B cell (primary cell): ENCODE measurements at regions of chr16 and their contacts with region 1.

Region 1: DNA sequence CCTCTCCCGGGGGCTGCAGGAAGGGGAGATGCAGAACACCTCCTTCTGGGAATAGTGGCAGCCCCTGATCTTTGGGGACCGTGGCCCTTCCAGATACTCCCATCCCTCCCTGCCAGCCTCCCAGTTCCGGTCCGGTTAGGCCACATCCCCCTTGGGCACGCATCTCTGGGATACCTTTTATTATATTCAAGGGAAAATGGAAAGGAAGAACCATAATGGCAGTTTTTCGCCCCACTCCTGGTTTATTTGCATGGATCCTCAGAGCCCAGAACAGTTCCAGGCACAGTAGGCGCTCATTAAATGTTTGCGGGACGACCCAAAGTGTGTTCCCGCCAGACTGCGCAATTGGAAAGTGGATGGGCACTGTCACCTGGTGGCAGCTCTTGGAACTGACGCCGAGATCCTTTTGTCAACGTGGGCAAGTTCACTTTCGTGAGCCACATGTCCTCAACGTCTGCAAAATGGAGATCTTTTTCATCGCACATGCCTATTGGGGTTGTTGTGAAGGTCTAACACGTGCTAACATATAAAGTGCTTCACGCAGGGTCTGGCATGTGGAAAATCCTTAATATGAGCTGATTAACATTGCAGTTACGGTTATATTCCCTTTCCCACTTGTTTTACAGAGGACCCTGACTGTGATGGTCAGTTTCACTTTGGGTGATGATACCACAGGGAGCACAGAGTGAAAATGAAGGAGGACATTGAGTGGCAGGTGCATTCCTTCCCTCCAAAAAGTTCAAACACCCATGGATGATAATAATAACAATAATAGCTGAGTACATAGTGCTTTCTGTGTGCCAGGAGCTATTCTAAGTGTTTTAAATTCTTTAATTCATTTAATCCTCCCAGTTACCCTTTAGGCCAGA is 1.7 kb upstream of the GPRC5B start:
- DNase-seq: peak; percentile 80
- ATAC-seq: peak; percentile 62
- H3K4me3 ChIP-seq: peak overlapping the region in 1 of 5 experiments; percentile 60
- H3K4me3 Mint-ChIP-seq: peak overlapping the region; percentile 85
- H3K27ac ChIP-seq: no peak overlapping the region
- H3K27ac Mint-ChIP-seq: no peak overlapping the region
- H3K4me1 ChIP-seq: peaks cover 33 to 34% of the 10 kb centered on the region in 2 donors
- H3K4me1 Mint-ChIP-seq: peaks cover 32% of the 10 kb centered on the region
- H3K27me3 ChIP-seq: peaks cover 0 to 46% (median 22%) of the 10 kb centered on the region in 4 experiments
- H3K27me3 Mint-ChIP-seq: peaks cover 35% of the 10 kb centered on the region
- CTCF ChIP-seq: peak; percentile 92

Region 2: GRCh38 chr16:19601083-19601976 is 285.0 kb before region 1 on chr16:
- CTCF ChIA-PET with region 1: interaction called, 47 read pairs
- POLR2A ChIA-PET with region 1: no interaction called
- intact Hi-C with region 1: no loop called
- DNase-seq: peak; percentile 15
- ATAC-seq: no peak
- H3K4me3 ChIP-seq: no peak overlapping the region
- H3K4me3 Mint-ChIP-seq: no peak overlapping the region
- H3K27ac ChIP-seq: no peak overlapping the region
- H3K27ac Mint-ChIP-seq: no peak overlapping the region
- H3K4me1 ChIP-seq: no peaks in the 10 kb centered on the region
- H3K4me1 Mint-ChIP-seq: no peaks in the 10 kb centered on the region
- H3K27me3 ChIP-seq: no peaks in the 10 kb centered on the region
- H3K27me3 Mint-ChIP-seq: no peaks in the 10 kb centered on the region
- CTCF ChIP-seq: peak; percentile 51

Region 3: DNA sequence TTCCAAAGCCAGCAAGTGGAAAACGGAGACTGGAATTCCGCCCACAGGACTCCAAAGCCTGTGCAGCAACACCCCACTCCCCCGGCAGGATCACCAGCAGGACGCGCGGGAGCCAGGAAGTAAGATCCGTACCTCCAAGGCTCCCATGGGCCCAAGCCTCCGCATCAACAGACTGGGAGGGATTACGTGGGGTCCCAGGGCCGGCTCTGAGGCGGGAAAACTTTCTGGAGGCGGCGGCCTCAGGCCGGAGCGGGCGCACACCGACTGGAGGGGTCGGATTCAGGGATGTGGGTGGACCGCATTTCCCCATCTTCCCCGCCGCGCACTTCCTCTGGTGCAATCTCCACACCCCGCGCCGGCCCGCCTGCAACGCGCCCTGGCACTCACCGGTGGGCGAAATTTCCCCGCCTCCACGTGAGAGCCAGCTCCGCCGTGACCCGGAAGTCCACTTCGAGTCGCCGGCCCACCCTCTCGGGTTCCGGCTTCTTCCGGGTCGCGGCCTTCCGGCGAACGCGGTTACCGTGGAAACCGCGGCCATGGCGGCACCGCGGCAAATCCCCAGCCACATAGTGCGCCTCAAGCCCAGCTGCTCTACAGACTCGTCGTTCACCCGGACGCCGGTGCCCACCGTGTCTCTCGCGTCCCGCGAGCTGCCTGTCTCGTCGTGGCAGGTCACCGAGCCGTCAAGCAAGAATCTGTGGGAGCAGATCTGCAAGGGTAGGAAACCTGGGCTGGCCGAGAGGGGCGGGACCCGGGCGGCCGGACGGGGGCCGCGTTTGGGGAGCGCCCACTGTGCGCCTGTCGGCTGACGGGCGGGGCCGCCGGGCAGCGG is 168.3 kb before region 1 on chr16 and contains the starts of genes IQCK and KNOP1:
- CTCF ChIA-PET with region 1: interaction called, 3 read pairs
- POLR2A ChIA-PET with region 1: no interaction called
- intact Hi-C with region 1: loop called (anchors 2 kb)
- DNase-seq: peak; percentile 94
- ATAC-seq: peak; percentile 93
- H3K4me3 ChIP-seq: peak within 1 kb of the TSS; percentile 68 to 99 (median 89)
- H3K4me3 Mint-ChIP-seq: peak within 1 kb of the TSS; percentile 93
- H3K27ac ChIP-seq: peak within 1 kb of the TSS in 1 of 2 donors; percentile 52
- H3K27ac Mint-ChIP-seq: peak within 1 kb of the TSS; percentile 81
- H3K4me1 ChIP-seq: peaks cover 11 to 13% of the 10 kb centered on the region in 2 donors
- H3K4me1 Mint-ChIP-seq: peaks cover 19% of the 10 kb centered on the region
- H3K27me3 ChIP-seq: no peaks in the 10 kb centered on the region
- H3K27me3 Mint-ChIP-seq: no peaks in the 10 kb centered on the region
- CTCF ChIP-seq: no peak
- total RNA-seq, gene IQCK: 3.0 and 4.3 TPM in 2 replicates
- total RNA-seq, gene KNOP1: 12.0 and 16.9 TPM in 2 replicates